ENCODE measurements at regions of chr9 and their contacts with region 1.

Region 1: GRCh38 chr9:131366761-131367401 is 27.0 kb upstream of the PRRC2B start:
- DNase-seq: peak in 2 of 9 experiments; percentile 35 to 48
- ATAC-seq: no peak
- H3K4me3 ChIP-seq: no peak overlapping the region
- H3K4me3 Mint-ChIP-seq: no peak overlapping the region
- H3K27ac ChIP-seq: no peak overlapping the region
- H3K27ac Mint-ChIP-seq: no peak overlapping the region
- H3K4me1 ChIP-seq: peaks cover 7% of the 10 kb centered on the region
- H3K4me1 Mint-ChIP-seq: peaks cover 13% of the 10 kb centered on the region
- H3K27me3 ChIP-seq: no peaks in the 10 kb centered on the region
- H3K27me3 Mint-ChIP-seq: no peaks in the 10 kb centered on the region
- CTCF ChIP-seq: no peak

Region 2: DNA sequence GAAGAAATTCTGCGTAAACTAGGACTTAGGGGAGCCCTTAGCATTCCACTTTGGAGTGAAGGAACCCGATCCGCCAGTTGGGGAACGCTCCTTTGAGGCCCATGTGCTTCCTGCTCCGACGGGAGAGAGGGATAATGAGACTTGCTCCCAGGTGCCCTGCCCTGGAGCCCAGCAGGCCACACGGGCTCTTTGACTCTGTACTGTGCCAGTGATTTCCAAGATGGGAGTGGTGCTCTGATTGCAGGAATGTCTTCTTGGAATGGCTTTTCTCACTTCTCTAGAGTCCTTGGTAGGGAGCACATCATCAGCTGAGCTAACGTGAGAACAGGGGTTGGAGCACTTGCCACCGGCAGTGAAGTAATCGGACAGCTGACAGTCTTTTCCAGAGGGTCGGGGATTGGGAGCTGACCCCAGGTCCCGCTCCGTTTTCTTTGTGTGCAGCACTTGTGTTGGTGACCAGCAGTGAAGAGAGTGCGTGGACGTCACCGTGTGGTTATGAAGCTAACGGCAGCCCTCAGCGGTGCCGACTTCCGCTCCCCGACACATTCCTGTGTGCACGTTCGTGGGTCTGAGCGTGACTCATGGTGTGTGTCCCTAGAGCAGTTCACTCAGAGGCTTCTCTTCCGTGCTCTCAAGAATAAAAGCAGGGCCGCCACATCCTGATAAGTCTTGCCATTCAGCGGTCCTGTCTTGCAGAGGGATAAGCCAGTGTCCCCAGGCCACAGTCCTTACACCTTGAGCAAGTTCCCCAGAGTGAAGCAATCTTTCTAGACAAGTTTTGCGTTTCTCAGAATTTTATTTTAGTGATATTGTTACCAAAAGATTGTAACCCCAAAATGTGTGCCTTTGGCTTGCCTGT is 506.2 kb before region 1 on chr9:
- CTCF ChIA-PET with region 1: no interaction called
- POLR2A ChIA-PET with region 1: no interaction called
- intact Hi-C with region 1: no loop called
- DNase-seq: peak in 1 of 9 experiments; percentile 20
- ATAC-seq: no peak
- H3K4me3 ChIP-seq: no peak overlapping the region
- H3K4me3 Mint-ChIP-seq: no peak overlapping the region
- H3K27ac ChIP-seq: no peak overlapping the region
- H3K27ac Mint-ChIP-seq: no peak overlapping the region
- H3K4me1 ChIP-seq: no peaks in the 10 kb centered on the region
- H3K4me1 Mint-ChIP-seq: no peaks in the 10 kb centered on the region
- H3K27me3 ChIP-seq: no peaks in the 10 kb centered on the region
- H3K27me3 Mint-ChIP-seq: no peaks in the 10 kb centered on the region
- CTCF ChIP-seq: no peak

Region 3: DNA sequence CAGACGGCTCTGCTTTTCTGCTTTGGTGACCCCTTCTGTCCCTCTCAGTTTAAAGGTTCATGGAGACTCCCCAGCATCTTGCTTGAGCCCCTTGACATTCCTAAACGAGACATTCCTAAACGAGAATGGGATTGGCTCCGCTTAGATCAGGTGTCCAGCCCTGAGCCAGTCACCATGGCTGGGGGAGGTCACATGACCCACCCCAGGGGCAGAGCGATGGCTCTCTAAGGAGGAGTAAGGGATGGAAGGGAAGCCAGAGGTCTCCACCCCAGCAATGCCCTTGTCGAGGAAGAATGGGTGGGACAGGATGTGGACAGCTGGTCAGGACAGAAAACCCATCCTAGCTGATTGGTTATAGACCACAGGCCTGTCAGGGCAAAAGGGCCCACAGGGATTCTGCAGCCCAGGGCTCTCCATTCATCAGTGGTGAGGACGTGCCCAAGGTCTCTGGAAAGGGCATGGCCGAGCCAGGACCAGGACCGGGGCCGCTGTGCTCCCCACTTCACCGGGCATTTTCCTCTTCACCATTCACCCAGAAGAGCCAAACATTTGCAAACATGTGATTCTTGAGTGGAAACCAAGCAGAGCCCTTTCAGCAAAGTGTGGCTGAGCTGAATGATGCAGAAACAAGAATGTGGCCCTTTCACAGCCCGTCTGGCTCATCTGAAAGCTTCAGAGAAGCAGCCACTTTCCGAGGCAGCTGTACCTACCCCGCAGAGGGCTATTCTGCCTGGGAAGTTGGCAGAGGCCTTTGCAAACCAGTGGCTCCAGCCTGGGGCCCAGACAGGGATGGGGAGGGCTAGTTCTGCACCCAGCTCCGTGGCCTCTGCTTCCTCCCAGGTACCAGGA is 290.3 kb before region 1 on chr9:
- CTCF ChIA-PET with region 1: no interaction called
- POLR2A ChIA-PET with region 1: no interaction called
- intact Hi-C with region 1: no loop called
- DNase-seq: no peak
- ATAC-seq: no peak
- H3K4me3 ChIP-seq: no peak overlapping the region
- H3K4me3 Mint-ChIP-seq: no peak overlapping the region
- H3K27ac ChIP-seq: no peak overlapping the region
- H3K27ac Mint-ChIP-seq: no peak overlapping the region
- H3K4me1 ChIP-seq: no peaks in the 10 kb centered on the region
- H3K4me1 Mint-ChIP-seq: no peaks in the 10 kb centered on the region
- H3K27me3 ChIP-seq: no peaks in the 10 kb centered on the region
- H3K27me3 Mint-ChIP-seq: no peaks in the 10 kb centered on the region
- CTCF ChIP-seq: no peak

Region 4: GRCh38 chr9:131277910-131278701 is 88.8 kb before region 1 on chr9:
- CTCF ChIA-PET with region 1: no interaction called
- POLR2A ChIA-PET with region 1: no interaction called
- intact Hi-C with region 1: no loop called
- DNase-seq: peak; percentile 43 to 89 (median 72)
- ATAC-seq: peak; percentile 51
- H3K4me3 ChIP-seq: peak overlapping the region; percentile 45 to 49
- H3K4me3 Mint-ChIP-seq: peak overlapping the region; percentile 90
- H3K27ac ChIP-seq: peak overlapping the region; percentile 48 to 84
- H3K27ac Mint-ChIP-seq: peak overlapping the region; percentile 90
- H3K4me1 ChIP-seq: peaks cover 26% of the 10 kb centered on the region
- H3K4me1 Mint-ChIP-seq: peaks cover 30% of the 10 kb centered on the region
- H3K27me3 ChIP-seq: peaks cover 0 to 3% of the 10 kb centered on the region in 2 experiments
- H3K27me3 Mint-ChIP-seq: no peaks in the 10 kb centered on the region
- CTCF ChIP-seq: no peak

Region 5: DNA sequence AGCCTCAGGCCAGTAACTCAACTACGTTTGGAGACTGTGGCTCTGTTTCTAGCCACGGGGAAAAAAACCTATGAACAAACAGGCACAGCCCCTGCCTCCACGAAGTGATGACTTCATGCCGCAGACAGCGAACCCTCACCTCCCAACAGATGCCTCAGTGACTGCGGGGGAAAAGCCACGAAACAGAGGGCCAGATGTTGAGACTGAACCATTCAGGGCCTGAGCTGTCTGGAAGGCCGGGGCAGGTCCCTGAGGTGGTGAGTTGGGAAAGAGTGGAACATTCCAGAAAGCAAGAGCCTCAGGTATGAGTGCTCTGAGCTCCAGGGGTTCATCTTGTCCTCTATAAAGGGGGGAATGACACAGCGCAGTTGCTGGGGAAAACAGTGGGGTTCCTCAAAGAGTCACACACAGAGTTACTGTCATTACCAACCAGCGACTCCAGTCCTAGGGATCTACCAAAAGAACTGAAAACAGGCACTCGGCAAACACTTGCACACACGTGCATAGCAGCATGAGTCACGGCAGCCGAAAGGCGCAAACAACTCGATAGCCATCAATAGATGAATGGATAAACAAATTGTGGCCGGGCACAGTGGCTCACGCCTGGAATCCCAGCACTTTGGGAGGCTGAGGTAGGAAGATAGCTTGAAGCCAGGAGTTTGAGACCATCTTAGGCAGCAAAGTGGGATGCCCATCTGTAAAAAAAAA is 62.0 kb before region 1 on chr9:
- CTCF ChIA-PET with region 1: no interaction called
- POLR2A ChIA-PET with region 1: no interaction called
- intact Hi-C with region 1: no loop called
- DNase-seq: no peak
- ATAC-seq: no peak
- H3K4me3 ChIP-seq: no peak overlapping the region
- H3K4me3 Mint-ChIP-seq: no peak overlapping the region
- H3K27ac ChIP-seq: no peak overlapping the region
- H3K27ac Mint-ChIP-seq: no peak overlapping the region
- H3K4me1 ChIP-seq: no peaks in the 10 kb centered on the region
- H3K4me1 Mint-ChIP-seq: no peaks in the 10 kb centered on the region
- H3K27me3 ChIP-seq: no peaks in the 10 kb centered on the region
- H3K27me3 Mint-ChIP-seq: no peaks in the 10 kb centered on the region
- CTCF ChIP-seq: no peak

Region 6: DNA sequence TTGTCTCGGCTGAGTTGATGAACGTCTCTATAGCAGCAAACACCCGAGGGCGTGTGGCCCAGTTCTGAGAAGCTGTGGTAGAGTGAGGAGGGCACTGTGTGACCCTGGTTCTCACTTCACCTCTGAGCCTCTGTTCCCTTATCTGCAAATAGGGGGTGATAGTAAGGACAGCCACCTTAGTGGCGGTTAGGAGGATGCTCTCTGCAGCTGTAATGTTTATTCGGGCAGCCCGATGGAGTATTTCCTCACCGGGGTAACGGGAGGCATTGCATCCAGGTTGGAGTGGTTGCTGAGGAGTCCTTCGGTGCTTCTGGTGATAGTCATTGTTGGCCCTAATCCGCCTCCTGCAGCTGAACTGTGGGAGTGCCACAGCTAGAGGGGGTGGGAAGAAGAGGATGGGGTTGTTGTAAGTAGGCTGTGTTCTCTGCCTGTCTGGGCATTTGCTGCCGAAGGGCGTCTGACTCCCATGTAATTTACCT is 40.9 kb after region 1 on chr9:
- CTCF ChIA-PET with region 1: interaction called, 6 read pairs
- POLR2A ChIA-PET with region 1: interaction called, 25 read pairs
- intact Hi-C with region 1: loop called (anchors 2 to 5 kb)
- DNase-seq: peak in 7 of 9 experiments; percentile 28 to 86 (median 66)
- ATAC-seq: peak; percentile 68
- H3K4me3 ChIP-seq: peak overlapping the region; percentile 42 to 47
- H3K4me3 Mint-ChIP-seq: peak overlapping the region; percentile 82
- H3K27ac ChIP-seq: peak overlapping the region; percentile 53 to 78
- H3K27ac Mint-ChIP-seq: peak overlapping the region; percentile 88
- H3K4me1 ChIP-seq: peaks cover 88% of the 10 kb centered on the region
- H3K4me1 Mint-ChIP-seq: peaks cover 90% of the 10 kb centered on the region
- H3K27me3 ChIP-seq: no peaks in the 10 kb centered on the region
- H3K27me3 Mint-ChIP-seq: no peaks in the 10 kb centered on the region
- CTCF ChIP-seq: peak; percentile 63

Region 7: DNA sequence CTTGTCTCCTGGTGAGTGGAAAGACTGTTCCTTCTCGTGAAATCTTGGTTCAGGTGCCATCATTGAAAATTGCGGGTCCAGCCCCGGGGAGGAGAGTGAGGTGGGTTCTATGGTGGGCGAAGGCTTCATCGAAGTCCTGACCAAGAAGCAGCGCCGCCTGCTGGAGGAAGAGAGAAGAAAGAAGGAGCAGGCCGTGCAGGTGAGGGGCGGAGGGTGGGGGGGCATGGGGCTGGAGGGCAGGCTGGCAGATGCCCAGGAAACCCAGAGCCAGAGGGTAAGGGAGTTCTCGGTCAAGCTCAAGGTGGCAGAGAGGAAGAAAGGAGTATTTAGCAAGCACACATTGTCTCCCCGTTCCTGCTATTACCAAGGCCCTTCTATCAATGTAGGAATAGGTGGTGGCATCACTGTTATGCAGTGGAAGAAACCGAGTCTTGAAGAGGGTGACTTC is 111.6 kb after region 1 on chr9:
- CTCF ChIA-PET with region 1: interaction called, 5 read pairs
- POLR2A ChIA-PET with region 1: no interaction called
- intact Hi-C with region 1: loop called in 1 of 2 experiments (anchors 5 kb)
- DNase-seq: peak; percentile 39 to 76 (median 65)
- ATAC-seq: peak; percentile 70
- H3K4me3 ChIP-seq: no peak overlapping the region
- H3K4me3 Mint-ChIP-seq: no peak overlapping the region
- H3K27ac ChIP-seq: no peak overlapping the region
- H3K27ac Mint-ChIP-seq: no peak overlapping the region
- H3K4me1 ChIP-seq: peaks cover 5% of the 10 kb centered on the region
- H3K4me1 Mint-ChIP-seq: peaks cover 2% of the 10 kb centered on the region
- H3K27me3 ChIP-seq: no peaks in the 10 kb centered on the region
- H3K27me3 Mint-ChIP-seq: no peaks in the 10 kb centered on the region
- CTCF ChIP-seq: peak; percentile 60

Region 8: GRCh38 chr9:131502781-131503625 is 136.1 kb after region 1 on chr9 and contains the start of gene POMT1:
- CTCF ChIA-PET with region 1: interaction called, 3 read pairs
- POLR2A ChIA-PET with region 1: interaction called, 3 read pairs
- intact Hi-C with region 1: loop called (anchors 5 kb)
- DNase-seq: peak; percentile 76 to 95 (median 87)
- ATAC-seq: peak; percentile 56
- H3K4me3 ChIP-seq: peak within 1 kb of the TSS; percentile 79 to 83
- H3K4me3 Mint-ChIP-seq: peak within 1 kb of the TSS; percentile 94
- H3K27ac ChIP-seq: peak within 1 kb of the TSS; percentile 45 to 50
- H3K27ac Mint-ChIP-seq: peak within 1 kb of the TSS; percentile 93
- H3K4me1 ChIP-seq: peaks cover 43% of the 10 kb centered on the region
- H3K4me1 Mint-ChIP-seq: peaks cover 62% of the 10 kb centered on the region
- H3K27me3 ChIP-seq: no peaks in the 10 kb centered on the region
- H3K27me3 Mint-ChIP-seq: no peaks in the 10 kb centered on the region
- CTCF ChIP-seq: no peak
- total RNA-seq, gene POMT1: 33.9 to 40.8 TPM

Region 9: GRCh38 chr9:131530920-131531832 is 164.3 kb after region 1 on chr9 and contains the start of gene UCK1:
- CTCF ChIA-PET with region 1: no interaction called
- POLR2A ChIA-PET with region 1: no interaction called
- intact Hi-C with region 1: loop called in 1 of 2 experiments (anchors 2 kb)
- DNase-seq: peak; percentile 42 to 89 (median 68)
- ATAC-seq: peak; percentile 91
- H3K4me3 ChIP-seq: peak within 1 kb of the TSS; percentile 64 to 73
- H3K4me3 Mint-ChIP-seq: peak within 1 kb of the TSS; percentile 74
- H3K27ac ChIP-seq: peak within 1 kb of the TSS; percentile 51 to 53
- H3K27ac Mint-ChIP-seq: peak within 1 kb of the TSS; percentile 55
- H3K4me1 ChIP-seq: peaks cover 35% of the 10 kb centered on the region
- H3K4me1 Mint-ChIP-seq: peaks cover 35% of the 10 kb centered on the region
- H3K27me3 ChIP-seq: no peaks in the 10 kb centered on the region
- H3K27me3 Mint-ChIP-seq: no peaks in the 10 kb centered on the region
- CTCF ChIP-seq: no peak
- total RNA-seq, gene UCK1: 22.6 to 24.7 TPM